Right lobe of liver (tissue), 6 donors: ENCODE measurements at regions of chr3 and their contacts with region 1.

Region 1: DNA sequence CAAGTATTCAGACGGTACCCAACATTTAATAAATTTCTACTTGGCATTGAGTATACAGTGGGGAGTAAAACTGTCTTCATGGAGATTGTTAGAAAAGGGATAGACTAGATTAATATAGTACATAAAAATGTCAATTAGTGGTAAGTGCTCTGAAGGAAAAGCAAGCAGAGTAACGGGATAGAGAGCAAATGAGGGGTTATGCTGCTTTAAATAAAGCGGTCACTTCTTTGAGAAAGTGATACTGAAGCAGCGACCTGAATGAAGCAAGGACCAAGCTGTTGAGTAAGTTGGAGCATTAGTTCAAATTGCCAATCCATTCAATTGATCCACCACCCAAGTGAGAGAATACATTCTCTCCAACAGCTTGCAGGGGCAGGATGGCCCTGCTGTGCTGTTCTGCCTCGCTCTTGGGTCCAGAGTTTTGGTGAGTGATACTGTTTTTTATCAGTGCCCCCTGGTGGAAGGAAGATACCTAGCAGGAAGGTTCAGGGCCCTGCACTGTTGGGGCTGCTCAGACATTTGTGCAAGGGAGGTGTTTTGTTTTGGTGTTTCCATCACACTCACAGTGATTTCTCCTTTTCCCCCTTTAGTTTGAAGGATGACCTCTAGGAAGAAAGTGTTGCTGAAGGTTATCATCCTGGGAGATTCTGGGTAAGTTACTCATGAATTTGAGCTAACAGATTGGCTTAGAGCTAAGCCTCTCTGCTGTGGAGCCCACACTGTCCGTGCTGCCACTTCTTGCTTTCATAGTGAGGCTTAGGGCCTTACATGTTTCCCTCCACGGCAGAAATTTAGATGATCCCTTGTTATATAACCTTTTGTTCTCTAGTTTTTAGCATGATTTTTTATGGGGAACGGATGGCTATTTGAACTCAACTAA is 69.0 kb downstream of the RAB7A start:
- DNase-seq: peak in 2 of 3 donors; percentile 37 to 69
- ATAC-seq: peak; percentile 96 to 98 (median 98)
- H3K4me3 ChIP-seq: no peak overlapping the region
- H3K27ac ChIP-seq: peak overlapping the region in 1 of 3 donors; percentile 4
- H3K4me1 ChIP-seq: peaks cover 0 to 14% (median 2%) of the 10 kb centered on the region in 4 donors
- H3K27me3 ChIP-seq: no peaks in the 10 kb centered on the region
- CTCF ChIP-seq: peak; percentile 79 to 89 (median 85)
- POLR2A ChIP-seq: no peak

Region 2: GRCh38 chr3:128680602-128681368 is 114.2 kb before region 1 on chr3:
- intact Hi-C with region 1: loop called in 1 of 2 experiments (anchors 5 kb)
- DNase-seq: peak; percentile 99 to 100 (median 100)
- ATAC-seq: peak; percentile 98 to 100 (median 99)
- H3K4me3 ChIP-seq: peak overlapping the region; percentile 62 to 71 (median 70)
- H3K27ac ChIP-seq: peak overlapping the region; percentile 85 to 98 (median 93)
- H3K4me1 ChIP-seq: no peaks in the 10 kb centered on the region
- H3K27me3 ChIP-seq: no peaks in the 10 kb centered on the region
- CTCF ChIP-seq: peak; percentile 96 to 100 (median 96)
- POLR2A ChIP-seq: peak; percentile 80

Region 3: DNA sequence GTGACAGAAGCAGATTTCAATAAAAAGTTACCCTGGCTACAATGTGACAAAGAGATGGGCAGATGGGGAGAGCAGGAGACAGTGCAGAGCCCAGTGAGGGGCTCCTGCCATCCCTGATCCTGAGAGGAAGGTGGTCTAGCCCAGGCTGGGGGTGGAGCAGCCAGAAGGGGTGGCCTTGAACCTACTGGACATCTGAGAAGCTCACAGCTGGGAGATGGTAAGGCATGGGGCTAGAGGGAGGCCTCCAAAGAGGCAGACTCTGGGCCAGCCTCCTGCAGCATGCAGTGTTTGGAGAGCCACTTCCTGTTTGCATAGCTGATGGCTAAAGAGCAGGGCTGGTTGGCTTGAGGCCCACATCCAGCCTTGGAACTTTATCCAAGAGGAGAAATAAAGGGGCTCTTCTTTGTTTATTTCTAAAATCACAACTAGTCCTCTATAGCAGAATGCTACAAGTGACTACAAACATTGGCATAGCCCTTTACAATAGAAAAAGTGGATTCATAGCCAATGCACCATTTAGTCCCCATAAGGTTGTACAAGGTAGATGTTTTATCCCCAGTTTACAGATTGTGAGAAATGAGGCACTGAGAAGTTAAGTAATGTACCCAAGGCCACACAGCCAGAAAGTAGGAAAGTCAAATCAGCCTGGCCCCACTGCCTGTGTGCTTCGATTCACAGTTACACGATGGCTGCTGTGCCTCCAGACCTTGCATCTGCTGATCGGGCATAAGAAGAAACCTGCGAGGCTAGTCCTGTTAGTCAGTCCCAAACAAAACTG is 210.7 kb after region 1 on chr3:
- intact Hi-C with region 1: no loop called
- DNase-seq: peak in 1 of 3 donors; percentile 57
- ATAC-seq: peak; percentile 58 to 75 (median 63)
- H3K4me3 ChIP-seq: no peak overlapping the region
- H3K27ac ChIP-seq: no peak overlapping the region
- H3K4me1 ChIP-seq: peaks cover 0 to 15% (median 0%) of the 10 kb centered on the region in 4 donors
- H3K27me3 ChIP-seq: peaks cover 0 to 10% of the 10 kb centered on the region in 2 donors
- CTCF ChIP-seq: no peak
- POLR2A ChIP-seq: no peak